Posterior cingulate gyrus (tissue), 11 donors: ENCODE measurements at regions of chr2 and their contacts with region 1.

Region 1: GRCh38 chr2:111919794-111920608 is 21.6 kb downstream of the MERTK start:
- DNase-seq: peak; percentile 25 to 90 (median 50)

Region 2: GRCh38 chr2:111897924-111898702 is 21.9 kb before region 1 on chr2 and contains the start of gene MERTK:
- intact Hi-C with region 1: loop called (anchors 2 kb)
- DNase-seq: peak; percentile 36 to 95 (median 68)

Region 3: GRCh38 chr2:111905990-111906735 is 13.8 kb before region 1 on chr2:
- intact Hi-C with region 1: loop called (anchors 1 kb)
- DNase-seq: peak in 1 of 10 donors; percentile 42